ENCODE measurements at regions of chr13 and their contacts with region 1.

Region 1: DNA sequence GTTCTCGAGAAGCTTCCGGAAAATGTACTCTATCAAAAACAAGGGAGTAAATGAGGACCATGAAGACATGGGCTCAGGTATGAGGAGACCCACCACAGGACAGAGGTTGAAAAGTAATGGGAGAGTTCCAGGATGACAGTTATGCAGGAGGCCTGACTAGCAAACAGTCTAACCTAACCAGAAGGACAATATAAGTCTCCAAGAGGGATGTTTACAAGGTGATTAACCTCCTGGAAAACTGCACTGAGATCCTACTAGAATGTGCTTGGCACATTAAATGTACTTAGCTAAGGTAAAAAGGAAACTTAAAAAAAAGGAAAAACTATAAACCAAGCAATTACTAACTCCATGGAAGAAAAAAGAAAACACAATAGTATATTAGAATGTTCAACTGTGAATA is 258.3 kb downstream of the KLF5 start:
- DNase-seq: no peak
- ATAC-seq: no peak
- H3K4me3 ChIP-seq: no peak overlapping the region
- H3K4me3 Mint-ChIP-seq: no peak overlapping the region
- H3K27ac ChIP-seq: no peak overlapping the region
- H3K27ac Mint-ChIP-seq: no peak overlapping the region
- H3K4me1 ChIP-seq: no peaks in the 10 kb centered on the region
- H3K4me1 Mint-ChIP-seq: no peaks in the 10 kb centered on the region
- H3K27me3 ChIP-seq: no peaks in the 10 kb centered on the region
- H3K27me3 Mint-ChIP-seq: no peaks in the 10 kb centered on the region

Region 2: DNA sequence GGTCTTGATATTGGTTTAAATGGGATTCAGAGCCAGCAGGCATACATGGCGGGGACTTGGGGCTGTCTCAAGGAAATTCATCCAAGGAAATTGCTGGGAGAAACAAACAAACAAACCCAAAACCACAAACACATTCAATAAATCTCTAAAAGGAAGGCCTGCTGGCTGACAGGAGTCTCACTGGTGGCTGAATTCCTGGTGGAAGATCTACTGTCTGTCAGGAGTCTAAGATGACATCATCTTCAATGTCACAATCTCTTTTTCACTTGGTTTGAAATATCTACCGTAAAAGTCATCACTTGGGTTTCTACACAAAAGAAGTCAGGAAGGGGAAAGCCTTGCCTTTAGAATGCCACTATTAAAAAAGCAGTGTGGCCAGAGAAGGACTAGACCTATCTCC is 170.4 kb before region 1 on chr13:
- CTCF ChIA-PET with region 1: interaction called in 1 of 2 experiments, 13 read pairs
- POLR2A ChIA-PET with region 1: no interaction called
- DNase-seq: no peak
- ATAC-seq: no peak
- H3K4me3 ChIP-seq: no peak overlapping the region
- H3K4me3 Mint-ChIP-seq: no peak overlapping the region
- H3K27ac ChIP-seq: no peak overlapping the region
- H3K27ac Mint-ChIP-seq: no peak overlapping the region
- H3K4me1 ChIP-seq: no peaks in the 10 kb centered on the region
- H3K4me1 Mint-ChIP-seq: peaks cover 0 to 2% (median 0%) of the 10 kb centered on the region in 3 donors
- H3K27me3 ChIP-seq: no peaks in the 10 kb centered on the region
- H3K27me3 Mint-ChIP-seq: no peaks in the 10 kb centered on the region